Activated CD8-positive, alpha-beta memory T cell treated with anti-CD3 and anti-CD28 coated beads, Interleukin-2, amount 10 ng/mL, durations not matched to agents 7 days and 5 days (primary cell): ENCODE measurements at regions of chr2 and their contacts with region 1.

Region 1: DNA sequence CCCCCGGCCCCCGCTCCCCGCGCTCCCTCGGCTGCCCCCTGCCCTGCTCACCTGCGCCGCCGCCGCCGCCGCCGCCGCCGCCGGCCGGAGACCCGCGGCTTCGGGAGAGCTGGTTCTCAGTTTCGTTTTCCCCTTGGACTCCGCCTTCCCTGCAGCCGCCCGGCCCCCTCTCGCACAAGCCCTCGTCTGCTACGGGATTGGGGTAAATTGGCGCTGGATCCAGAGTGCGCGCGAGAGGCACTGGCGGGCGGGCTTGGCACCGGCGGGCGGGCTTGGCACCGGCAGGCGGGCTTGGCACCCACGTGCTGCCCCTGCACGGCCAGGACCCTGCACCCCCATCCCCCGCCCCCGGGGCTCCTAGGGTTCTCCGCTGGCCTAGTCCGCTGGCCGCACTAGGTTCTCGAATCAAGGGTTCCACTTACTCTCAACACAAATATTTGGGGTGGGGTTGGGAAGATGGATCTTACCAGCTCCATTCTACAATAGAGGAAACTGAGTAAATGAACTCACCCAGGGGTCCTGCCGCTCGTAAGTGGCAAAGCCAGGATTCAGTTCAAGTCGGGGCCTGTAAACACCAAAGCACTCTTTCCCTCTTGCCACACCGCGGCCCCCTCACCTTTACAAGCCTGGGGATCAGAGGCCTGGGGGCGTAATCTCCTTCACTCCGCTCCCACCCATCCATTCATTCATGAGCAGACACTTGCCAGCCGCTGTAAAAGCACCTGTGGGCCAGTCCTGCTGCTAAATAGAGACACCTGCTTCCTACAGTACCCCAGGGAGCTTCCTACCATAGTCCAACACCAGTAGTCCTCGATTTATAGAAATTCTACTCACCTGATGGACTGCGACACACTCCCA is at the start of gene EIF2AK2:
- DNase-seq: peak; percentile 95
- ATAC-seq: peak; percentile 96
- H3K4me3 Mint-ChIP-seq: peak within 1 kb of the TSS; percentile 98
- H3K27ac Mint-ChIP-seq: peak within 1 kb of the TSS; percentile 98
- H3K4me1 Mint-ChIP-seq: peaks cover 46% of the 10 kb centered on the region
- H3K27me3 Mint-ChIP-seq: no peaks in the 10 kb centered on the region
- total RNA-seq, gene EIF2AK2: 115 to 175 TPM

Region 2: DNA sequence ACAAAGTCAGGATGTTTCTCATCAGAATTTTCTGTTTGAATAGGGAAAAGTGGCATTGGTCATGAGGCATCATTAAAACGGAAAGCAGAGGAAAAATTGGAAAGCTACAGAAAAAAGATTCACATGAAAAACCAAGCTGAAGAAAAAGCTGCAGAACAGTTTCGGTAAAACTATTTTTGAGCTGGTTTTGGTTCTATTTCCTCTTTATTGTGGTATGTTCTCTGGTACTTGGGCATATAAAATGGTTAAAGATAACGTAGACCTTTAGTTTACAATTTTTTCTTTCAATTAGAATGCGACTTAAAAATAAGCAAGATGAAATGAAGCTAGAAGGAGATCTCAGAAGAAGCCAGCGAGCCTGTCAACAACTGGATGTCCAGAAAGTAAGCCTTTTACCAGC is 65.2 kb before region 1 on chr2:
- CTCF ChIA-PET with region 1: no interaction called
- DNase-seq: no peak
- ATAC-seq: no peak
- H3K4me3 Mint-ChIP-seq: no peak overlapping the region
- H3K27ac Mint-ChIP-seq: peak overlapping the region; percentile 58
- H3K4me1 Mint-ChIP-seq: peaks cover 6% of the 10 kb centered on the region
- H3K27me3 Mint-ChIP-seq: no peaks in the 10 kb centered on the region

Region 3: DNA sequence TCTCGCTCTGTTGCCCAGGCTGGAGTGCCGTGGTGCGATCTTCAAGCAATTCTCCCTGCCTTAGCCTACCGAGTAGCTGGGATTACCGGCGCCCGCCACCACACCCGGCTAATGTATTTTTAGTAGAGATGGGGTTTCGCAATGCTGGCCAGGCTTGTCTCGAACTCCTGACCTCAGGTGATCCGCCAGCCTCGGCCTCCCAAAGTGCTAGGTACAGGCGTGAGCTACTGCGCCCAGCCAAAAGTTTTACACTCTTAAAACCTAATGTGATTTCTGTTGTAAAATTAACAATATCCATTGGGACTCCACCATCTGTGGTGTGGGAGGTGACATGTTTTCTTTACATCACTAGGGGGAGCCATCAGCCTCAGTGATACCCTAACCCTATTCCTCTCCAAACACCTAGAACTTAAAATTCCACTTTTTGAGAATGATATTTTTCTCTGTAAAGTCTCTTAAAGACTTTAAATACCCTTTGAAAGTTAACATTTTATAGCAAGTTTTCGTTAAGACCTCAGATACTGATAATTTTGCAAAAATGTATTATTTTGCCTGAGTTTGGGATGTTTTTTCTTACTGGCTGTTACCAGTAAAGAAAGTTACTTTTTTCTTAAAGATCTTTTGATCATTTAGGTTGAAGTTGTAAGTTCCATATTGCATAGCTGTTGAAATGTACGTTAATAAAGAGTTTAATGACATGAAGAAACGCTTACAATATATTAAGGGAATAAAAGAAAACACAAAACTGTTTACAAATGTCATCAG is 11.3 kb after region 1 on chr2:
- CTCF ChIA-PET with region 1: interaction called, 14 read pairs
- DNase-seq: peak; percentile 45
- ATAC-seq: peak; percentile 89
- H3K4me3 Mint-ChIP-seq: no peak overlapping the region
- H3K27ac Mint-ChIP-seq: no peak overlapping the region
- H3K4me1 Mint-ChIP-seq: no peaks in the 10 kb centered on the region
- H3K27me3 Mint-ChIP-seq: no peaks in the 10 kb centered on the region

Region 4: DNA sequence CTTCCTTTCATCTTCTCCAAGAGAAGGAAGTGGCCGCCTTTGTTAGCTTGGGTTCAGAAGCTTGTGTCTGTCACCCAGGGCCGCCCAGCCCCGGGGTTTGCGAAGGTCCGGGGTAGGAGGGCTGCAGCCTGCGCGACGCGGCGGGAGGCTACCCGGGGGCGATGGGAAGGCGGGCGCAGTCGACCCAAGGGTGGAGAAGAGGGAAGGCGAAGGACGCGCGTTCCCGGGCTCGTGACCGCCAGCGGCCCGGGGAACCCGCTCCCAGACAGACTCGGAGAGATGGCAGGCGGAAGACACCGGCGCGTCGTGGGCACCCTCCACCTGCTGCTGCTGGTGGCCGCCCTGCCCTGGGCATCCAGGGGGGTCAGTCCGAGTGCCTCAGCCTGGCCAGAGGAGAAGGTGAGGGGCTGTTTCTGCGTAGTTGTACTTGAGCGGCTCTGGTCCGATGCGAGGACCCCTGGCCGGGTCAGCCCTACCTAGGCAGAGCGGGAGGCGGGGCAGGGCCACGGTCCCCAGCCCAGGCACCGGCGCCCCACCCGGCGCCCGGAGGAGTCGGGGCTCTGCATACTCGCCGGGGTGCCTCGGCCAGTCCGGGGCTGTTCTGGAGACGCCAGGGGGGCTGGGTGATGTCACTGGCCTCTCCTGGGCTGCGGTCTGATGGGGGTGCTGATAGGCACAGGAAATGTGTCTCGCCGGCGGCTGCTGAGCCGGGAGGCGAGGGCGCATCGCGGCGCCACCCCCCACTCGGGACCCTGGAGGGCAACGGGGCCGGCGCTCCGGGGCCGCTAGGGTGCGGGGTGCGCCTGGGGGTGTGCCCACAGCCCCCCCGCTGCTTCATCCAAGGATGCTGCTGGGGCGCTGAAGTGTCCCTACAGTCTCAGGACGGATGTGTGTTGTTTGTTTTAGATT is 187.6 kb after region 1 on chr2 and contains the start of gene QPCT:
- CTCF ChIA-PET with region 1: no interaction called
- DNase-seq: peak; percentile 78
- ATAC-seq: peak; percentile 90
- H3K4me3 Mint-ChIP-seq: peak within 1 kb of the TSS; percentile 65
- H3K27ac Mint-ChIP-seq: no peak within 1 kb of the TSS
- H3K4me1 Mint-ChIP-seq: peaks cover 8% of the 10 kb centered on the region
- H3K27me3 Mint-ChIP-seq: peaks cover 82% of the 10 kb centered on the region
- total RNA-seq, gene QPCT: 1.9 TPM in 1 of 2 experiments, not detected in the other